Breast epithelium (tissue), 4 donors: ENCODE measurements at regions of chr20 and their contacts with region 1.

Region 1: GRCh38 chr20:19015351-19016139 is 196.9 kb upstream of the SLC24A3 start:
- DNase-seq: no peak
- H3K4me3 ChIP-seq: no peak overlapping the region
- H3K27ac ChIP-seq: peak overlapping the region in 1 of 2 donors; percentile 69
- H3K4me1 ChIP-seq: no peaks in the 10 kb centered on the region
- H3K27me3 ChIP-seq: no peaks in the 10 kb centered on the region
- CTCF ChIP-seq: no peak
- POLR2A ChIP-seq: no peak

Region 2: GRCh38 chr20:17431621-17432364 is 1583.8 kb before region 1 on chr20:
- intact Hi-C with region 1: loop called (anchors 5 kb)
- DNase-seq: no peak
- H3K4me3 ChIP-seq: no peak overlapping the region
- H3K27ac ChIP-seq: no peak overlapping the region
- H3K4me1 ChIP-seq: no peaks in the 10 kb centered on the region
- H3K27me3 ChIP-seq: peaks cover 0 to 17% of the 10 kb centered on the region in 2 donors
- CTCF ChIP-seq: peak; percentile 25 to 81 (median 65)
- POLR2A ChIP-seq: no peak

Region 3: DNA sequence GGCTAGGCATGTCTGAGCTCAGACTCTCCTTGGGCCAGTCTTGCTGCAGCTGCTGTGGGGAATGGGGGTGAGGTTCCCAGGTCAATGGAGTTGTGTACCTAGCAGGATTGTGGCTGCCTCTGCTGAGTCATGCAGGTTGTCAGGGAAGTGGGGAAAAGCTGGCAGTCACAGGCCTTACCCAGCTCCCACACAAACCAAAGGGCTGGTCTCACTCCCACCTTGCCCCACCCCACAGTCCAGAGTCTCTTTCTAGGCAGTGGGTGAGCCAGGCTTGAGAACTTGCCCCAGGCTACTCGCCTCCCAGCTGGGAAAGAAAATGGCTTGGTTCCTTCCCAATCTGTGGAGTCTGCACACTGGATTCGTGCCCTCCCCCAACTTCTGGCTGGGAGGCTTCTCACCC is 136.3 kb before region 1 on chr20:
- intact Hi-C with region 1: no loop called
- DNase-seq: no peak
- H3K4me3 ChIP-seq: no peak overlapping the region
- H3K27ac ChIP-seq: no peak overlapping the region
- H3K4me1 ChIP-seq: no peaks in the 10 kb centered on the region
- H3K27me3 ChIP-seq: no peaks in the 10 kb centered on the region
- CTCF ChIP-seq: no peak
- POLR2A ChIP-seq: no peak

Region 4: GRCh38 chr20:18973529-18974173 is 41.9 kb before region 1 on chr20:
- intact Hi-C with region 1: loop called (anchors 1 kb)
- DNase-seq: no peak
- H3K4me3 ChIP-seq: no peak overlapping the region
- H3K27ac ChIP-seq: peak overlapping the region in 1 of 2 donors; percentile 52
- H3K4me1 ChIP-seq: no peaks in the 10 kb centered on the region
- H3K27me3 ChIP-seq: no peaks in the 10 kb centered on the region
- CTCF ChIP-seq: no peak
- POLR2A ChIP-seq: no peak